ENCODE measurements at regions of chr6 and their contacts with region 1.

Region 1: DNA sequence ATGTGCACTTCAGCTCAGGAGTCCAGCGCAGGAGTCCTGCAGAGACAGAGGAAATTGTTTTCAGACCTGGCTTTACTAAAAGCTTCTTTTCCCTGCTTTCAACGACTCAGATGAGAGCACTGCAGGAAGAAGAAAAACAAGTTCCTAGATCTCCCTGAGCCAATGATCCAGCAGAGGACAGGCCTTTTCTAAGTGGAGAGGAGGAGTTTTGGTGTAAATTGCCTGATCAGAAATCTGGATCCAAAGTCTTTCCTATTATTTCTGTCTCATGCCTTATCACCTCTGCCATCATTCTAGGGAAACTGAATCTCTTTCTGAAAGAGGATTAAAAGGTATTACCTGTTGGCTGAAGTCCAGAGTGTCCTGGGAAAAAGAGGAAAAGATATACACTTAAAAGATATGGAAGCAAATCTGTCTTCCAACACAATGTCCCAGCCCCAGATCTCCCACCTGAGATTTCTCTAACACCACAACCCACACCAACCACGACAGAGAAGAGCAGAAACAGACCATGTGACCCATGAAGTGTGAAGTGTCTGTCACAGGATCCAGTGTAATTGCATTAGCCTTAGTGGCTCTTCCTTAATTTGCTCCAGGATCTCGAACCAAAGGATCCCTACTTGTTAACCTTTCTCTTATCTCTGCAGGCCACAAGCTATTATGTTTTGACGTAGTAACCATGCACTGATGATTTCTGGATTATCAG is 23.1 kb upstream of the HLA-DRB5 start:
- DNase-seq: no peak
- H3K4me3 Mint-ChIP-seq: no peak overlapping the region
- H3K27ac Mint-ChIP-seq: no peak overlapping the region
- H3K4me1 Mint-ChIP-seq: no peaks in the 10 kb centered on the region
- H3K27me3 Mint-ChIP-seq: peaks cover 15% of the 10 kb centered on the region

Region 2: DNA sequence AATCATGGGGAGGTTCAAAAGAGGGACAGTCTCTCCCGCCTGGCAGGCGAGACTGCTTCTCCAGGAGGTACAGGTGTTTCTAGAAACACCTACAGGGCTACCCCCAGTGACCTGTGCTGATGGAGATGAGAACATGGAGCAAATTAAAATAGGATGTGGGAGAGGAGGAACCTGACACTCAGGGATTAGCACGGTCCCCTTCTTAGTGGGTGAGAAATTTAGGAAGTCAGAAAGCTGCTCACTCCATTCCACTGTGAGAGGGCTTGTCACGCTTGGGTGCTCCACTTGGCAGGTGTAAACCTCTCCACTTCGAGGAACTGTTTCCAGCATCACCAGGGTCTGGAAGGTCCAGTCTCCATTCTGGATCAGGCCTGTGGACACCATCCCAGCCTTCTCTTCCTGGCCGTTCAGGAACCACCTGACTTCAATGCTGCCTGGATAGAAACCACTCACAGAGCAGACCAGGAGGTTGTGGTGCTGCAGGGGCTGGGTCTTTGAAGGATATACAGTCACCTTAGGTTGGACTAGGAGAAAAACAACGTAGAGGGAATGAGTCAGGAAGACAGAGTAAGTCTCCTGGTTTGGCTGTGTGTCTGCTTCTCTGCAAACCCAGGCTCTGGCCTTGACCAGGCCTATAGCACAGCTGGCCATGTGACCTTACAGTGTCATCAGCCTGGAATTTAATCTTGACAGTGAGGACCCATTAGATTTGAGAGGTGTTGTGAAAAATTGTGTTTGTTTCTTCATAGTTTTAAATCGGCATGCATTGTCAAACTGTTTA is 28.3 kb after region 1 on chr6:
- intact Hi-C with region 1: loop called (anchors 1 kb)
- DNase-seq: no peak
- H3K4me3 Mint-ChIP-seq: no peak overlapping the region
- H3K27ac Mint-ChIP-seq: no peak overlapping the region
- H3K4me1 Mint-ChIP-seq: peaks cover 25% of the 10 kb centered on the region
- H3K27me3 Mint-ChIP-seq: peaks cover 3% of the 10 kb centered on the region